CD4-positive, alpha-beta T cell (primary cell): ENCODE measurements at regions of chr7 and their contacts with region 1.

Region 1: DNA sequence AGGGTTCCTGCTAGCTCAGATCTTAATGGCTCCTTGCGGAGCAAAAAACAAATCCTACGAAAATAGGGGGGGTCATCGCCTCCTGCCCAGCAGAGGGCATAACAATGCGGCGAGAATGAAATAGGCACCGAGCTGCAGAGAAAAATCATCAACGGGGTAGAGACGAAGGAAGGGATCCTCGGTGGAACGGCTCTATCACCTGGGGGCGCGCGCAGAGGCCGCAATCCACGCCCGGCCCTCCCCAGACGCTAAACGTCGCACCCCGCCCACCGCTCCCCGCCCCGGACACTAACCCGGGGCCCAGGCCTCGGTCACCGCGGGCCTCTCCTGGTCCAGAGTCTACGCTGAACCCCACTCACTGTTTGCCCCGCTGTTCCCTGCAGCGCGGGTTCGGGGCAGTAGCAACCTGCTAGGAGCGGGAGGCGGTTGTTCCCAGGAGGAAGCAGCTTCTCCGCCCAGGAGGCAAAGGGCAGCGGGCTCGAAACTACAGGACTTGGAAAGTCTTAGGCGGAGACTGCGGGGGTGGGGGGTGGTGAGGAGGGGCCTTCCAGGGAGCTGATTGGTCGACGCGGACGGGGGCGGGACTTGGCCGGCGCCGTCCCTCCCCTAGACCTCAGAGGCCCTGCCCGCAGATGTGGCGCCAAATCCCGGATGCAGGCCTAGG is at the start of gene TCAF1:
- DNase-seq: peak; percentile 78 to 94 (median 86)
- ATAC-seq: peak; percentile 94
- H3K4me3 ChIP-seq: peak within 1 kb of the TSS; percentile 88
- H3K4me3 Mint-ChIP-seq: peak within 1 kb of the TSS; percentile 92
- H3K27ac ChIP-seq: peak within 1 kb of the TSS; percentile 52 to 60
- H3K27ac Mint-ChIP-seq: peak within 1 kb of the TSS; percentile 83
- H3K4me1 ChIP-seq: peaks cover 12% of the 10 kb centered on the region
- H3K4me1 Mint-ChIP-seq: peaks cover 38% of the 10 kb centered on the region
- H3K27me3 ChIP-seq: no peaks in the 10 kb centered on the region
- H3K27me3 Mint-ChIP-seq: no peaks in the 10 kb centered on the region
- CTCF ChIP-seq: peak; percentile 47
- total RNA-seq, gene TCAF1: 7.7 to 8.6 TPM

Region 2: GRCh38 chr7:143008007-143008901 is 893.5 kb before region 1 on chr7:
- CTCF ChIA-PET with region 1: no interaction called
- POLR2A ChIA-PET with region 1: no interaction called
- intact Hi-C with region 1: no loop called
- DNase-seq: peak; percentile 66 to 91 (median 80)
- ATAC-seq: peak; percentile 96
- H3K4me3 ChIP-seq: no peak overlapping the region
- H3K4me3 Mint-ChIP-seq: no peak overlapping the region
- H3K27ac ChIP-seq: no peak overlapping the region
- H3K27ac Mint-ChIP-seq: no peak overlapping the region
- H3K4me1 ChIP-seq: peaks cover 1% of the 10 kb centered on the region
- H3K4me1 Mint-ChIP-seq: peaks cover 3% of the 10 kb centered on the region
- H3K27me3 ChIP-seq: no peaks in the 10 kb centered on the region
- H3K27me3 Mint-ChIP-seq: peaks cover 4% of the 10 kb centered on the region
- CTCF ChIP-seq: peak; percentile 93

Region 3: GRCh38 chr7:143299840-143300239 is 602.0 kb before region 1 on chr7:
- CTCF ChIA-PET with region 1: no interaction called
- POLR2A ChIA-PET with region 1: no interaction called
- intact Hi-C with region 1: loop called in 1 of 2 experiments (anchors 10 kb)
- DNase-seq: peak; percentile 52 to 83 (median 67)
- ATAC-seq: peak; percentile 100
- H3K4me3 ChIP-seq: no peak overlapping the region
- H3K4me3 Mint-ChIP-seq: no peak overlapping the region
- H3K27ac ChIP-seq: no peak overlapping the region
- H3K27ac Mint-ChIP-seq: no peak overlapping the region
- H3K4me1 ChIP-seq: peaks cover 11% of the 10 kb centered on the region
- H3K4me1 Mint-ChIP-seq: peaks cover 40% of the 10 kb centered on the region
- H3K27me3 ChIP-seq: no peaks in the 10 kb centered on the region
- H3K27me3 Mint-ChIP-seq: no peaks in the 10 kb centered on the region
- CTCF ChIP-seq: peak; percentile 70

Region 4: GRCh38 chr7:143884969-143885559 is 16.7 kb before region 1 on chr7:
- CTCF ChIA-PET with region 1: interaction called, 9 read pairs
- POLR2A ChIA-PET with region 1: interaction called, 11 read pairs
- intact Hi-C with region 1: no loop called
- DNase-seq: peak in 1 of 14 experiments; percentile 11
- ATAC-seq: no peak
- H3K4me3 ChIP-seq: no peak overlapping the region
- H3K4me3 Mint-ChIP-seq: no peak overlapping the region
- H3K27ac ChIP-seq: no peak overlapping the region
- H3K27ac Mint-ChIP-seq: no peak overlapping the region
- H3K4me1 ChIP-seq: peaks cover 17% of the 10 kb centered on the region
- H3K4me1 Mint-ChIP-seq: peaks cover 39% of the 10 kb centered on the region
- H3K27me3 ChIP-seq: peaks cover 35 to 40% of the 10 kb centered on the region in 2 experiments
- H3K27me3 Mint-ChIP-seq: peaks cover 78% of the 10 kb centered on the region
- CTCF ChIP-seq: no peak

Region 5: DNA sequence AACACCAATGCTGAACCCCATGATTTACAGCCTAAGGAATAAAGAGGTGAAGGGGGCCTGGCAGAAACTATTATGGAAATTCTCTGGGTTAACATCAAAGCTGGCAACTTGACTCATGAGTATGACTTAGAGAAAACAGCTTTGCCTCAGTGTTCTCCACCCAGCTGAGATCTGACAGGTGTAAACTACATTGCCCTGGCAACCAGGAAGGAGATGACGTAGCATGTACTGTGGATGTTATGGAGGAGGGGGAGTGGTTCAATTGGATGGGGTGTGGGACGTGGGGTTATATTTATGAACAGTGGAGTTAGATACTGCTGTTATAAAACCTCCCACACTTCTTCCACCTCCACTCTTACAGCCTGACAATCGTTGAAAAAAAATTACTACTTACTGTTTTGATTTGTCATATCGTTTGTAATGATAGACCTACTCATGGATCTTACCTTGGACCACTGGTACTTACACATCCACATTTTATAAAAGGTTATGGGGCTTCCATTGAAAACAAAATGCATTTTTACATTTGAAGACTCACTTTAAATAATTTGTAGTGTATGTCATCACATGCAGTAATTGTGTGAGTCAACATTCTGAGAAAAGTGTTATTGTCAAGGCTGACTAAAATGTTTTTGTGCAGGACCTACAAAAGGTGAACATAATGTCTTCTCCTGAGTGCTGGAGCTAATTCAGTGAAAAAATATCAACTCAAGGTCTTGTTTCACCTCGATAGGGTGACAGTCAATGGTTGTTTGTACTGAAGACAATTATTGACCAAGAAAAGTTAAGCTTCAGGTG is 59.2 kb after region 1 on chr7:
- CTCF ChIA-PET with region 1: no interaction called
- POLR2A ChIA-PET with region 1: no interaction called
- intact Hi-C with region 1: no loop called
- DNase-seq: no peak
- ATAC-seq: no peak
- H3K4me3 ChIP-seq: no peak overlapping the region
- H3K4me3 Mint-ChIP-seq: no peak overlapping the region
- H3K27ac ChIP-seq: no peak overlapping the region
- H3K27ac Mint-ChIP-seq: no peak overlapping the region
- H3K4me1 ChIP-seq: no peaks in the 10 kb centered on the region
- H3K4me1 Mint-ChIP-seq: no peaks in the 10 kb centered on the region
- H3K27me3 ChIP-seq: peaks cover 0 to 8% of the 10 kb centered on the region in 2 experiments
- H3K27me3 Mint-ChIP-seq: peaks cover 51% of the 10 kb centered on the region
- CTCF ChIP-seq: no peak

Region 6: DNA sequence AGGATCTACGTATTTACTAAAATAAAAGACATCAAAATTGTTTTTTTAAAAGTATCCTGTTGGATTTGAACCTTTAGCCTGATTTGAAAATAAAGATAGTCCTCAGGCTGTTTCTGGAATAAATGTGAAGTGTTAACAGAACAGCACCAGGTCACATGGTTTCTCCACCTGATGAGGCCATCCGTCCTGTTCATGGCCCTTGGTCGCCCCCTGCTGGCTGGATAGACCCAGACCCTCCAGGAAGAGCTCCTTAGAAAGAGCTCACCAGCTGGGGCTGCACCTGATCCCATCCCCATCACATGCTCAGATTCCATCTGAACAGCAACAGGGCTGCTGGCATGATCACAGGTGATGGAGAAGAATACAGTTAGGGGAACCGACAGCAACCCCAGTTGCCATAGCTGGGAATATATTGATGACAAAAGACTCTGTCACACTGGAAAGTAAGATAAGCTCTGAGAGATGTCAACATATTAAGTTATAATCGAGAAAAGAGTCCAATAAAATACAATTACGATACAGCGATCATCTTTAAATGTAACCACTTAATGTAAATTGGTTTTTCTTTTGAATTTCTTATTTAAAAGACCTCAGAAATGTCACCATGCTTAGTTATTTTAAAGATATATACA is 226.0 kb after region 1 on chr7:
- CTCF ChIA-PET with region 1: no interaction called
- POLR2A ChIA-PET with region 1: interaction called, 4 read pairs
- intact Hi-C with region 1: loop called (anchors 5 to 10 kb)
- DNase-seq: peak; percentile 77 to 93 (median 84)
- ATAC-seq: peak; percentile 100
- H3K4me3 ChIP-seq: no peak overlapping the region
- H3K4me3 Mint-ChIP-seq: no peak overlapping the region
- H3K27ac ChIP-seq: no peak overlapping the region
- H3K27ac Mint-ChIP-seq: no peak overlapping the region
- H3K4me1 ChIP-seq: no peaks in the 10 kb centered on the region
- H3K4me1 Mint-ChIP-seq: no peaks in the 10 kb centered on the region
- H3K27me3 ChIP-seq: no peaks in the 10 kb centered on the region
- H3K27me3 Mint-ChIP-seq: peaks cover 11% of the 10 kb centered on the region
- CTCF ChIP-seq: peak; percentile 87